Mammary epithelial cell (primary cell): ENCODE measurements at regions of chr12 and their contacts with region 1.

Region 1: GRCh38 chr12:88186003-88186402 is 43.9 kb downstream of the TMTC3 start:
- DNase-seq: peak; percentile 86
- H3K4me3 ChIP-seq: no peak overlapping the region
- H3K27ac ChIP-seq: peak overlapping the region; percentile 40
- H3K4me1 ChIP-seq: peaks cover 4% of the 10 kb centered on the region
- H3K27me3 ChIP-seq: no peaks in the 10 kb centered on the region
- CTCF ChIP-seq: no peak

Region 2: DNA sequence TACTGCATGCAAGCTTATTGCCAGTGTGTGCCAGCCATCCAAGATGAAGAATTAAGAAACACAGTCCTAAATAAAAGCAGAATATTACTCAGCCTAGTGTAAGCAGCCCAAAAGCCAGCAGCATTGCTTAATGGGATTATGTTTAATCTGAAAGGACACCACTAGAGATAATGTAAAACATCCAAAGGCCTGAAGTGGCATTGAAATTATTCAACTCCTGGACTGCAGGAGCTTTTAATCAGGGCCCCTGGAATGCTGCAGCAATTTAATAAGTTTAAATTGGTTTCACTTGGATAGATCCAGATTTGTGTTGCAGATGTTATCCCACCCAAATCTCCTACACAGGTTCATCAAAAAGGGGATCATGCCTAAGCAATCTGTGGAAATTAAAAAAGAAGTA is 349.8 kb before region 1 on chr12:
- CTCF ChIA-PET with region 1: no interaction called
- dilution Hi-C with region 1: no loop called
- in situ Hi-C with region 1: no loop called
- intact Hi-C with region 1: no loop called
- DNase-seq: no peak
- H3K4me3 ChIP-seq: no peak overlapping the region
- H3K27ac ChIP-seq: no peak overlapping the region
- H3K4me1 ChIP-seq: no peaks in the 10 kb centered on the region
- H3K27me3 ChIP-seq: no peaks in the 10 kb centered on the region
- CTCF ChIP-seq: no peak

Region 3: GRCh38 chr12:88393017-88393767 is 207.2 kb after region 1 on chr12:
- CTCF ChIA-PET with region 1: no interaction called
- dilution Hi-C with region 1: no loop called
- in situ Hi-C with region 1: no loop called
- intact Hi-C with region 1: loop called (anchors 10 kb)
- DNase-seq: peak; percentile 56
- H3K4me3 ChIP-seq: no peak overlapping the region
- H3K27ac ChIP-seq: no peak overlapping the region
- H3K4me1 ChIP-seq: peaks cover 10% of the 10 kb centered on the region
- H3K27me3 ChIP-seq: no peaks in the 10 kb centered on the region
- CTCF ChIP-seq: peak; percentile 55 to 56

Region 4: DNA sequence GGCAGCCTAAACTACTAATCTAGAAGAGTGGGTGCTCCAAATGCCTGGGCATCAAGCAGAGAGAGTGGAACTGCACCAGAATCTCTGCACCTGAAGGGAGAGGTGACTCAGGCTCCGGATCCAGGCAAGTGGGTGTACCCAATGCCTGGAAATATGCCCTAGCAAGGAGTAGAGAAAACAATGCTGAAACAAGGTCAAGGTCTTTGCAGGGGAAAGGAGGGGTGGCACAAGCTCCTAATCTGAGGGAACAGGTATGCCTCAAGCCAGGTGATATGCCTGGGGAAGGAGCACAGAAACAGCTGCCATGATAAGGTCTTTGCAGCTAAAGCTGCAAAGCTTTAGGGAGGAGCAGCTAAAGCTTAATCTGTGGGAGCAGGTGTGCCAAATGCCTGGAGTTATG is 530.2 kb after region 1 on chr12:
- CTCF ChIA-PET with region 1: no interaction called
- dilution Hi-C with region 1: no loop called
- in situ Hi-C with region 1: no loop called
- intact Hi-C with region 1: no loop called
- DNase-seq: no peak
- H3K4me3 ChIP-seq: no peak overlapping the region
- H3K27ac ChIP-seq: no peak overlapping the region
- H3K4me1 ChIP-seq: peaks cover 6% of the 10 kb centered on the region
- H3K27me3 ChIP-seq: no peaks in the 10 kb centered on the region
- CTCF ChIP-seq: no peak

Region 5: DNA sequence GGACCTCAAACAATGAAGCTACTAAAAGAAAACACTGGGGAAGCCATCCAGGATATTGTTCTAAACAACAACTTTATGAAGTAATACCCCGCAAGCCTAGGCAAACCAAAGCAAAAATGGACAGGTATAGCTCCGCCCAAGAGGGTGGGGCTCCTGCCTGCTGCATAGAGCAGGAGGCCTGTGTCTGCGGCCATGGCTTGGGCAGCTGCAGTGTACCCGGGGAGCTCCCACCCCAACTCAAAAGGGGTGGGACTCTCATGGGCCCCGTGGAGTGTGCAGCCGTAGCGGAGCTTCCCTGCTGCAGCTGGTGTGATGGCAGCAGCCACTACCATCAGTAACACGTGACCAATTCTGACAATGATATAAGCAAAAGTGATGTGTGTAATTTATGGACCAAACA is 658.4 kb after region 1 on chr12:
- CTCF ChIA-PET with region 1: no interaction called
- dilution Hi-C with region 1: no loop called
- in situ Hi-C with region 1: no loop called
- intact Hi-C with region 1: no loop called
- DNase-seq: no peak
- H3K4me3 ChIP-seq: no peak overlapping the region
- H3K27ac ChIP-seq: no peak overlapping the region
- H3K4me1 ChIP-seq: no peaks in the 10 kb centered on the region
- H3K27me3 ChIP-seq: no peaks in the 10 kb centered on the region
- CTCF ChIP-seq: no peak